Activated B cell treated with CpG ODN at 0.5 μM for 24 hours (primary cell): ENCODE measurements at regions of chr1 and their contacts with region 1.

Region 1: GRCh38 chr1:212477014-212477679 is 44.4 kb downstream of the NENF start:
- DNase-seq: peak; percentile 52
- ATAC-seq: peak; percentile 97
- H3K4me3 Mint-ChIP-seq: no peak overlapping the region
- H3K27ac Mint-ChIP-seq: no peak overlapping the region
- H3K4me1 Mint-ChIP-seq: peaks cover 8% of the 10 kb centered on the region
- H3K27me3 Mint-ChIP-seq: peaks cover 19% of the 10 kb centered on the region
- CTCF ChIP-seq: peak; percentile 85

Region 2: DNA sequence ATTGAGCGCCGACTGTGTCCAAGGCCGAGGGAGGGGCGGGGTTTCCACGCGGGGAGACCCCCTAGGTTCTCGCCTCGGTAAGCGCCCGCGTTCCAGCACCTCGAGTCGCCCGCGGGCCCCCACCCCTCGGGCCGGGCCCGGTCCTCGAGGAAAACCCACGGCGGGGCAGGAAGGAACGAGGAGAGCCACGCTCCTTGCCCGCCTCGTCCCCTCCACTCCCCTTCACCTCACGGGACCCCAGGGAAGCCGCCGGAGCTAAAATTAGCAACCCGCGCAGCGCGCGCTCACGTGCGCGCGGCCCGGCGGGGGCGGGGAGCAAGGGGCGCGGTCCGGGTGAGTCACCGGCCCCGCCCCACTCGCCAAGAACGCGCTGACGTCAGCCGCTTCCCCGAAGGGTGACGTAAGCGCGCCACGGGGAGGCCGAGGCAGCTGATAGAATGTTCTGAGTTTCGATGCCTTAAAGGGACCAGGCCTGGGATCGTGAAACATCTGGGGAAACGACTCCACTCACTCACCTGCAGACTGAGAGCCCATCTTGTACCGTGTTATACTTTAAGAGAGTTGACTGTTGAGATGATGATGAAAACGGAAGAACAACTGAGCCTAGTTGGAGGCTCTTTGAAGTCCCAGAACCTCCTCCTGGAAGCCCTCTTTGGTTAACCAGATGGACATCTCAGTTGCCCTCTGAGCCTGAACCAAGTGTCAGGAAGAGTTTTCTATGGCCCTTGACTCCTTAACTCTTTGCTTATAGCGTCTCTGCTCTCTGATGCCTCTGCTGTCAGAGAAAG is 81.7 kb after region 1 on chr1:
- CTCF ChIA-PET with region 1: interaction called, 4 read pairs
- POLR2A ChIA-PET with region 1: interaction called, 3 read pairs
- intact Hi-C with region 1: loop called (anchors 1 kb)
- DNase-seq: peak; percentile 93
- ATAC-seq: peak; percentile 88
- H3K4me3 Mint-ChIP-seq: peak overlapping the region; percentile 88
- H3K27ac Mint-ChIP-seq: peak overlapping the region; percentile 93
- H3K4me1 Mint-ChIP-seq: peaks cover 13% of the 10 kb centered on the region
- H3K27me3 Mint-ChIP-seq: peaks cover 2% of the 10 kb centered on the region
- CTCF ChIP-seq: no peak

Region 3: DNA sequence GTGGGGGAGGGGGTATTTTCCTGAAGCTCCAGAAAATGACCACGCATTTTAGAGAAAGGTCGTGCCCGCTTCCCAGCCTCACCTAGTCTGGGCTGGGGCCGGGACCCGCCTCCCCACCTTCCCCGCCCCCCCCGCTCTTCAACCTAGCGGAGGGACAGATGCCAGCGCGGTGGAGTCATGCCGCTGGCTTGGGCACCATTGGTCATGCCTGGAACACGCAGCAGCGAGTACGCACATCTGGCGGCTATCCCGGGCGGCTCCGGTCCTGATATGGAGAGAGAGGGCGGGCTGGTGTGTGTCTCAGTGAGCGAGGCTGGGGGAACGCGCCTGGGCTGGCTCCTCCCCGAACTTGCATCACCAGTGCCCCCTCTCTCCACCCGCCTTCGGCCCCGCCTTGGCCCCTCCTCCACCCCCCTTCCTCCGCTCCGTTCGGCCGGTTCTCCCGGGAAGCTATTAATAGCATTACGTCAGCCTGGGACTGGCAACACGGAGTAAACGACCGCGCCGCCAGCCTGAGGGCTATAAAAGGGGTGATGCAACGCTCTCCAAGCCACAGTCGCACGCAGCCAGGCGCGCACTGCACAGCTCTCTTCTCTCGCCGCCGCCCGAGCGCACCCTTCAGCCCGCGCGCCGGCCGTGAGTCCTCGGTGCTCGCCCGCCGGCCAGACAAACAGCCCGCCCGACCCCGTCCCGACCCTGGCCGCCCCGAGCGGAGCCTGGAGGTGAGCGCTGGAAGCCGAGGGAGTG is 131.2 kb after region 1 on chr1 and contains the start of gene ATF3:
- CTCF ChIA-PET with region 1: interaction called, 3 read pairs
- POLR2A ChIA-PET with region 1: interaction called, 38 read pairs
- intact Hi-C with region 1: loop called (anchors 1 kb)
- DNase-seq: peak; percentile 76
- ATAC-seq: peak; percentile 84
- H3K4me3 Mint-ChIP-seq: peak within 1 kb of the TSS; percentile 95
- H3K27ac Mint-ChIP-seq: peak within 1 kb of the TSS; percentile 90
- H3K4me1 Mint-ChIP-seq: peaks cover 29% of the 10 kb centered on the region
- H3K27me3 Mint-ChIP-seq: peaks cover 32% of the 10 kb centered on the region
- CTCF ChIP-seq: no peak
- total RNA-seq, gene ATF3: 13.1 and 16.8 TPM in 2 replicates

Region 4: GRCh38 chr1:212665241-212666115 is 188.3 kb after region 1 on chr1:
- CTCF ChIA-PET with region 1: interaction called, 58 read pairs
- POLR2A ChIA-PET with region 1: no interaction called
- intact Hi-C with region 1: loop called (anchors 1 kb)
- DNase-seq: peak; percentile 80
- ATAC-seq: peak; percentile 94
- H3K4me3 Mint-ChIP-seq: peak overlapping the region; percentile 82
- H3K27ac Mint-ChIP-seq: peak overlapping the region; percentile 53
- H3K4me1 Mint-ChIP-seq: peaks cover 17% of the 10 kb centered on the region
- H3K27me3 Mint-ChIP-seq: no peaks in the 10 kb centered on the region
- CTCF ChIP-seq: peak; percentile 61

Region 5: GRCh38 chr1:212699104-212699624 is 222.0 kb after region 1 on chr1:
- CTCF ChIA-PET with region 1: interaction called, 7 read pairs
- POLR2A ChIA-PET with region 1: interaction called, 5 read pairs
- intact Hi-C with region 1: loop called (anchors 1 kb)
- DNase-seq: peak; percentile 56
- ATAC-seq: peak; percentile 55
- H3K4me3 Mint-ChIP-seq: peak overlapping the region; percentile 88
- H3K27ac Mint-ChIP-seq: peak overlapping the region; percentile 79
- H3K4me1 Mint-ChIP-seq: peaks cover 45% of the 10 kb centered on the region
- H3K27me3 Mint-ChIP-seq: peaks cover 11% of the 10 kb centered on the region
- CTCF ChIP-seq: no peak

Region 6: DNA sequence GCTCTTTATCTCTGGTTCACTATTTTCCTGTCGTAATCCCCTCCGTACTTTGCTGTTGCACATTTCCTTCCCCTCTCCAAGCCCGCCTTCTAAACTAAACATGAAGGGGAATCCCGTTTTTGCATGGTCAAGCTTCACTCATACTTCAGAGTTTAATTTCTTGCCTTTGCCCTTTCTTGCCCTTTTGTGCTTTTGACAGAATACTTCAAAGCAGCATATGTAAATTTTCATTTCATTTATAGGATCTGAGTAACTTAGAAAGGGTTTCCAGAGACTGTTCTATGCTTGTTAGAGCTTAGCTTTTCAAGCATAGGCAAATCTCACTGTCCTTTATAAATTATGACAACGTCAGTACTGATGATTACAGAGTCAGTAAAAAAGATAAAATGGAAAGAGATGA is 342.6 kb after region 1 on chr1:
- CTCF ChIA-PET with region 1: no interaction called
- POLR2A ChIA-PET with region 1: no interaction called
- intact Hi-C with region 1: no loop called
- DNase-seq: no peak
- ATAC-seq: peak; percentile 72
- H3K4me3 Mint-ChIP-seq: peak overlapping the region; percentile 72
- H3K27ac Mint-ChIP-seq: peak overlapping the region; percentile 67
- H3K4me1 Mint-ChIP-seq: peaks cover 17% of the 10 kb centered on the region
- H3K27me3 Mint-ChIP-seq: no peaks in the 10 kb centered on the region
- CTCF ChIP-seq: no peak

Region 7: GRCh38 chr1:212994926-212995325 is 517.8 kb after region 1 on chr1:
- CTCF ChIA-PET with region 1: interaction called, 15 read pairs
- POLR2A ChIA-PET with region 1: no interaction called
- intact Hi-C with region 1: loop called (anchors 1 kb)
- DNase-seq: no peak
- ATAC-seq: no peak
- H3K4me3 Mint-ChIP-seq: no peak overlapping the region
- H3K27ac Mint-ChIP-seq: no peak overlapping the region
- H3K4me1 Mint-ChIP-seq: no peaks in the 10 kb centered on the region
- H3K27me3 Mint-ChIP-seq: no peaks in the 10 kb centered on the region
- CTCF ChIP-seq: no peak